Ovary (tissue), 10 donors: ENCODE measurements at regions of chr18 and their contacts with region 1.

Region 1: GRCh38 chr18:25650201-25650941 is 298.4 kb upstream of the ZNF521 start:
- DNase-seq: no peak
- H3K4me3 ChIP-seq: no peak overlapping the region
- H3K27ac ChIP-seq: no peak overlapping the region
- H3K4me1 ChIP-seq: no peaks in the 10 kb centered on the region
- H3K27me3 ChIP-seq: no peaks in the 10 kb centered on the region
- CTCF ChIP-seq: no peak
- EP300 ChIP-seq: no peak
- POLR2A ChIP-seq: no peak

Region 2: DNA sequence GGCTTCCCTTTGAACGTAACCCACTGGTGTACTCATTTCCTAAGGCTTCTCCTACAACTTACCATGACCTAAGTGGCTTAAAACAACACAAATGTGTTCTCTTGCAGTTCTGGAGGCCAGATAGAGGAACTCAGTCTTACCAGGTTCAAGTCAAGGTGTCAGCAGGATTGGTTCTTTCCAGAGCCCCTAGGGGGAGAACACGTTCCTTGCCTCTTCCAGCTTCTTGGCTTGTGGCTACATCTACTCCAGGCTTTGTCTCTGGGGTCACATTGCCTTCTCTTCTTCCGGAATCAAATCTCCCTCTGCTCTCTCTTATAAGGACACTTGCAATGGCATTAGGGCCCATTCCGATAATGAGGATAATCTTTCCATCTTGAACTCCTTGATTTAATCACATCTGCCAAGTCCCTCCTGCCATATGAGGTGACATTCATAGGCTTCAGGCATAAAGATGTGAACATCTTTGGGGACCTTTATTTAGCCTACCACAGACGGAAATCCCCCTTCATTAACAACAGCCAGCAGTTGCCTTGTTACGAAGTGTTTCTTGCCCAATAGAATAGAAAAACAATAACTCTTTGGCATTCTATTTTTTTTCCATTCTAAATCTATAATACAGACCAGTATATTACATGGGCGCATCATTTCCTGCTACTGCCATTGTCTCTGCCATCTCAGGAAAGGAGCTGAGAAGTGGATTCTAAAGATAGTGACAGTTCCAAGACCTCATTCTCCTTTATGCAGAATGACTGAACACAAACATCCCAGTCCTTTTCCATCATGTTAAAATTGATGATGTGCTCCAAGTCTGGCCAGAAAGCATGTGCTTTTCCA is 660.4 kb before region 1 on chr18:
- intact Hi-C with region 1: loop called in 1 of 4 experiments (anchors 10 kb)
- DNase-seq: no peak
- H3K4me3 ChIP-seq: no peak overlapping the region
- H3K27ac ChIP-seq: no peak overlapping the region
- H3K4me1 ChIP-seq: no peaks in the 10 kb centered on the region
- H3K27me3 ChIP-seq: no peaks in the 10 kb centered on the region
- CTCF ChIP-seq: no peak
- EP300 ChIP-seq: no peak
- POLR2A ChIP-seq: no peak

Region 3: DNA sequence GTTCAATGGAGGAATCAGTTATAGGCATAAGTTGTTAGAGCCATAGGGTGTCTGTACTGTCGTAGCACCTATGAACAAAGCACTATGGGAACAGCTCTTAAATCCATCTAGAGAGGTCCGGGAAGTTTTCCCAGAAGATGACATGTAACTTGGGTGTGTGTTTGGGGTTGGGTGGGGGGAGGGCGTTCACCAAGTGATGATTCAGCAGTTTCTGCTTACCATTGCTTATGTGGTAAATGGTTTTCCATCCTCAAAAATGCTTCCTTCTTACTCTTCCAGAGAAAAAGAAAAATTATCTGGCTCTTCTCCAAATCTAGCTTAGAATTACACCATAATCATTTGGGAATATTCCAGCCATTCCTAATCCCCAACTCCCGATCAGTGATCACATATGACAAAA is 62.7 kb after region 1 on chr18:
- intact Hi-C with region 1: loop called in 1 of 4 experiments (anchors 10 kb)
- DNase-seq: no peak
- H3K4me3 ChIP-seq: no peak overlapping the region
- H3K27ac ChIP-seq: no peak overlapping the region
- H3K4me1 ChIP-seq: no peaks in the 10 kb centered on the region
- H3K27me3 ChIP-seq: no peaks in the 10 kb centered on the region
- CTCF ChIP-seq: no peak
- EP300 ChIP-seq: no peak
- POLR2A ChIP-seq: no peak